CD14-positive monocyte (primary cell): ENCODE measurements at regions of chr6 and their contacts with region 1.

Region 1: DNA sequence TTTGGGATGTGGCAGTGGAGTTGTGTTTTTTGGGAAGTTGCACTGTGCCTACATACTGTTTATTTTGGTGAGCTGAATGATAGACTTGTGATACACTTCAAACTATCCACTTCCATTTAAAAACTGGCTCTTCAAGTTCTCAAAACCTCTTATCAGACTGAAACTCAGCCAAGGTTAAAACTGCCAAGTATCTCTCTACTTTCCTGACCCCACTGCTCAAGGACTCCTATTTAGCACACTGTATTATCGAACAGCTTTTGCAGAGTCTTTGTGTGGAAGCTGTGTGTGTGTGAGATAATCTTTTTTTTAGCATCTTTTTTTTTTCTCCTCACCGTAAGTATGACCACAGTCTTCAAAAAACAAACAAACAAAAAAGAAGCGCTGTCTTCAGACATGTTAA is 21.1 kb downstream of the STX11 start:
- DNase-seq: no peak
- H3K4me3 ChIP-seq: no peak overlapping the region
- H3K4me3 Mint-ChIP-seq: no peak overlapping the region
- H3K27ac ChIP-seq: no peak overlapping the region
- H3K27ac Mint-ChIP-seq: no peak overlapping the region
- H3K4me1 ChIP-seq: peaks cover 39 to 67% of the 10 kb centered on the region in 2 donors
- H3K4me1 Mint-ChIP-seq: peaks cover 66% of the 10 kb centered on the region
- H3K27me3 ChIP-seq: no peaks in the 10 kb centered on the region
- H3K27me3 Mint-ChIP-seq: peaks cover 0 to under 1% (median 0%) of the 10 kb centered on the region in 3 donors
- CTCF ChIP-seq: no peak

Region 2: DNA sequence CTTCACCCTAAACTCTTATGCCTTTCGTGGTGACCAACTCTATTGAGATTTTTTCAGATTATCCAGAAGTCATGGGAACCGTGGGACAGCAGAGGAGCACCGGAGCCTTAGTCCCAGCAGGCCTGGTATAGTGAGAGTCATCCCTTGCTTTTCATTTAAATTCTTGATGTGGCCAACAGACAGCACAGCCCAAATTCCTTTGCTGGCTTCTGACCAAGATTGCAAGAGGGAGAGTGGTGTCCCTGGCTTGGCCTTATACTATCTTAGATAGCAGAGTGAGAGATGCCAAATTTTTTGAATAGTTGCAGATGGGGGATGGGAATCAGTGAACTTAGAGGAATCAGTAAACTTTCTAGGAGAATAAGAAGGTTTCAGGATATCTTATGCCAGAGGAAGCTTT is 13.3 kb before region 1 on chr6:
- intact Hi-C with region 1: loop called in 1 of 2 experiments (anchors 2 kb)
- DNase-seq: no peak
- H3K4me3 ChIP-seq: peak overlapping the region in 1 of 3 experiments; percentile 90
- H3K4me3 Mint-ChIP-seq: peak overlapping the region; percentile 56 to 67
- H3K27ac ChIP-seq: peak overlapping the region; percentile 23 to 96
- H3K27ac Mint-ChIP-seq: peak overlapping the region; percentile 75 to 99 (median 97)
- H3K4me1 ChIP-seq: peaks cover 98 to 100% of the 10 kb centered on the region in 2 donors
- H3K4me1 Mint-ChIP-seq: peaks cover 97% of the 10 kb centered on the region
- H3K27me3 ChIP-seq: no peaks in the 10 kb centered on the region
- H3K27me3 Mint-ChIP-seq: no peaks in the 10 kb centered on the region
- CTCF ChIP-seq: no peak